ENCODE measurements at regions of chr22 and their contacts with region 1.

Region 1: DNA sequence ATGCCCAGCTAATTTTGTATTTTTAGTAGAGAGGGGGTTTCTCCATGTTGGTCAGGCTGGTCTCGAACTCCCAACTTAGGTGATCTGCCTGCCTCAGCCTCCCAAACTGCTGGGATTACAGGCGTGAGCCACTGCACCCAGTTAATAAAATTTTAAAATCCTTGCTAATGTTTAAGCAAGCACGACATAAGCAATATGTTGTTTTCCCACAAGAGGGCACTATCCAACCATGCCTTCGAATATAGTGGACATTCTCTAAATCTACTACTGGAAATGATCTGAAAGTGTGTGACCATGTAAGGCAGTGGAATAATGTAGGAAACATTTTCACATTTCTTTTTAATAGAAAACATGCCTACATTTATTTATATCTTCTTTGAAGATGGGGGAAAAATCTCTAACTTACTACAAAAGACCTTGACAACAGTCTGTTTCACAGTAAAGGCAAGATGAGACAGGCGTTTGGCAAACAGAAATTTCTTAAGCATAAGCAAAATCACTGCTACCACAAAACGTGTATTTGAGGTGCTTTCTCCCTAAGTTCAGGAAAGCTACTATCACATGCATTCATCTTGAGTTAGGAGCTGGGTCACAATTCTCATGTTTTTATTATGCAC is 38.2 kb downstream of the PITPNB start:
- DNase-seq: peak; percentile 50
- ATAC-seq: no peak
- H3K4me3 Mint-ChIP-seq: no peak overlapping the region
- H3K27ac Mint-ChIP-seq: peak overlapping the region; percentile 30
- H3K4me1 Mint-ChIP-seq: peaks cover 29% of the 10 kb centered on the region
- H3K27me3 Mint-ChIP-seq: no peaks in the 10 kb centered on the region

Region 2: DNA sequence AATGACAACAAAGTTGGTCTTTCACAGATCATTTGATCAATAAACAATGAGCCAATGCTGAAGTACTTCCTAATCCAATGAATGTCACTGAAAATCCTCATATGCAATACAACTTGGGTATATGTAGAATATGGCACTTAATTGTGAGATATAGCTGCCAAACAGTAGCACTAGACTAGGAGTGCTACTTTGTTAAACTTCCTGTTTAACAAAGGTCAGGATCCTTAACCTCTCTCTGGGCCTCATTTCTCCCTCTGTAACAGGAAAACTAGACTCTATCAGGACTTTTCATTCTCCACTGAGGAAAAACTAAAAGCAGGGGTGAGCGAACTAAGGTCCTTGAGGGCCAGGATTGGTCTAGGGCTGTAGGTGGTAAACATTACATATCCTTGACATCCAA is 17.9 kb before region 1 on chr22:
- CTCF ChIA-PET with region 1: interaction called, 19 read pairs
- POLR2A ChIA-PET with region 1: no interaction called
- DNase-seq: no peak
- ATAC-seq: no peak
- H3K4me3 Mint-ChIP-seq: no peak overlapping the region
- H3K27ac Mint-ChIP-seq: no peak overlapping the region
- H3K4me1 Mint-ChIP-seq: peaks cover 14% of the 10 kb centered on the region
- H3K27me3 Mint-ChIP-seq: no peaks in the 10 kb centered on the region

Region 3: DNA sequence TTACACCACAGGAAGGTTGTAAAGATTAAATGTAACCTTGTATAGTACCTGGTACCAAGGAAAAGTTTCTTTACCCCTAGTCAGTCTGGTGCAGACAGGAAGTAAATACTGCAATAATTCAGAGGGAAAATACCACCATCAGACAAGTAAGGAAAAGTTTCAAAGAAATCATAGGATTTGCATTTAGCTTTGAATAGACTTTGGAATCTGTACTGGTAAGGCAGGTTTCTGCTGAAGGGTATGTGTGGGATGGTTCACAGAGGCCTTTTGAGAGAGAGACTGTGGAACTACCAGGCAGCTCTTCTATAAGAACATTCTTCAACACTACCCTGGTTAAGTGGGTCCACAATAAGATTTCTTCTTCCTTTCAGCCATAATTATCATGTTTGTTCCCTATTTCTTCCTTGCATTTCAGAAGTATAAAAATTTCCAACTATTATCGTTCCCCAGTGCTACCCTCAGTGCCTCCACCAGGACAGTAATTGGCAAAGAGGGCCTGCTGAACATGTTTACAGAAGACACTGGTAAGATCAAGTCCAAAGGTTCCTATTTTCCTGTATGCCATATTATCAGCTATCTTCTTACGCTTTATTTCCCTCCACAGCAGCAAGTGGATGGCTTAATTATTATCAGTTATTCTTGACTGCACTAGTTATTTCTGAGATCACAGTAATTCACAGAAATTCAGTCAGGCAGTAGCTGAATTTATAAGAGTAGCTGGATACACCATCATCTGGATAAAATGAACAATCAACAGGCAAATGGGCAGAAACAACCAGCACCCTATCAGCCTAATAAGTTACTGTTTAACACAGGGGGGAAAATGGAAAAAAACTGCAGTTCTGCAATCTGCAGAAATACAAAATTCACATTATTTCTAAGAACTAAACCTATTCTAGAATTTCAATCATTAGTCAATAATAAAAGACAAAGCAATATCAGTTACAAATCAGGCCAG is 10.4 kb before region 1 on chr22:
- CTCF ChIA-PET with region 1: interaction called, 17 read pairs
- POLR2A ChIA-PET with region 1: no interaction called
- DNase-seq: no peak
- ATAC-seq: no peak
- H3K4me3 Mint-ChIP-seq: no peak overlapping the region
- H3K27ac Mint-ChIP-seq: no peak overlapping the region
- H3K4me1 Mint-ChIP-seq: peaks cover 33% of the 10 kb centered on the region
- H3K27me3 Mint-ChIP-seq: no peaks in the 10 kb centered on the region

Region 4: GRCh38 chr22:28009272-28009827 is 128.5 kb after region 1 on chr22:
- CTCF ChIA-PET with region 1: interaction called, 20 read pairs
- POLR2A ChIA-PET with region 1: no interaction called
- DNase-seq: peak; percentile 79
- ATAC-seq: peak; percentile 90
- H3K4me3 Mint-ChIP-seq: no peak overlapping the region
- H3K27ac Mint-ChIP-seq: no peak overlapping the region
- H3K4me1 Mint-ChIP-seq: no peaks in the 10 kb centered on the region
- H3K27me3 Mint-ChIP-seq: no peaks in the 10 kb centered on the region